PC-9 (cell line): ENCODE measurements at regions of chr20 and their contacts with region 1.

Region 1: DNA sequence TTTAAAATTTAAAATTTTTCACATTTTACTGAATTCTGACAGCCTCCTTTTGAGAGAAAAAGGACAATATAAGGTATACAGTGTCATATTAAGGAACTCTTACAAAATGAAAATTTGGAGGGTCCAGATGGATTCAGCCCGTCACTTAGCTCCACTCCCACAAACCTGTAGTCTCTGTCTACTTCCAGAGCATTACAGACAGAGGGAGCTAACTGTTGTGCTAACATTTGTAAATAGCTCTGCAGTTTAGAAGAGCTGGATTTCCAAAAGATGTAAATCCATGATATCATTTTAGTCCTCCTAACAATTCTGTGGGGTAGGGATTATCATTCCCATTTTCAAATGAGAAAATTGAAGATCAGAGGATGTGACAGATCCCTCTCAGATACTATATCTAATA is 16.1 kb upstream of the SERINC3 start:
- DNase-seq: no peak
- H3K4me3 ChIP-seq: no peak overlapping the region
- H3K27ac ChIP-seq: no peak overlapping the region
- H3K4me1 ChIP-seq: peaks cover 4% of the 10 kb centered on the region
- H3K27me3 ChIP-seq: no peaks in the 10 kb centered on the region
- CTCF ChIP-seq: no peak

Region 2: GRCh38 chr20:44566013-44566412 is 28.0 kb after region 1 on chr20:
- CTCF ChIA-PET with region 1: no interaction called
- POLR2A ChIA-PET with region 1: interaction called, 10 read pairs
- intact Hi-C with region 1: loop called (anchors 5 kb)
- DNase-seq: peak in 1 of 2 experiments; percentile 83
- H3K4me3 ChIP-seq: no peak overlapping the region
- H3K27ac ChIP-seq: no peak overlapping the region
- H3K4me1 ChIP-seq: peaks cover 4% of the 10 kb centered on the region; the same call in 1 of the 2 replicates
- H3K27me3 ChIP-seq: no peaks in the 10 kb centered on the region
- CTCF ChIP-seq: no peak

Region 3: DNA sequence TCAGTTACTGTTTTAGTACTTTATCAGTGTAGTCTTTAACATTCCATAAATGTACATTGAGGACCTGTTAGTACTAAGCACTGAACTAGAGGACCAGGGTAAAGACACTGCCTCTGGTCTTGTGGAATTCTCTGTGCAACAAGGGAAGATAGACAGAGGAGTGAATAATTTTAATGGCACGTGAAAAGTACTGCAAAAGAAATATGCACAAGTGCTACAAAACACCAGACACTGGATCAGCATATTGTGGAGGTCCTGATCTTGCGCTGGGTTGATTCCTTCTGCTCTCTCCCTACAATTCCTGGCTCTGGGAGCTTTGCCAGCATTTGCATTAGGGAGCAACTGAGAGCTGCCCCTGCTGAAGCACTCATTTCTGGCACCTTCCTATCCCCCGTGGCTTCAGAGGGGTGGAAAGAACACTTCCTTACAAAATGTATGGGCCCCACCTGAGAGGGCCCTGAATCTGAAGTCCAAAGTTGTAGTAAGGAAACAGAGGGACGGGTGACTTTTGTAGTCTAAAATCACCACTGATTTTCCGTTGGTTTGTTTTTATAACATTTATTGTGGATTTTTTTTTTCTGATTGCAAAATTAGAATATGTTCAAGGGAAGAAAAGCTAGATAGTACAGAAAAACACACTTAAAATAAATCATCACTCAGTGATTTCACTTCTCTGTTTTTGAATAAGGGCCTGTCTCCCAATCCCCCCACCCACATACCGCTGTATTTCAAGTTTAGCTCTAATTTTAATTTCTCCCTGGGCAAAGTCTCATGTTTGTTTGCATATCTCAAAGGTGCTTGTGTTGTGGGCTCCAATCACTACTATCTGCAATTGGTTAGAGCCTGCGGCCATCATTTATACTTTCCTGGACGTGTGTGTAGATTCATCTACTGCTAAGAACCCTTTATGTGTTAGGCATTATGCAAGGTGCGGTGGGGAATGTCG is 49.3 kb after region 1 on chr20:
- CTCF ChIA-PET with region 1: no interaction called
- POLR2A ChIA-PET with region 1: no interaction called
- intact Hi-C with region 1: no loop called
- DNase-seq: no peak
- H3K4me3 ChIP-seq: no peak overlapping the region
- H3K27ac ChIP-seq: no peak overlapping the region
- H3K4me1 ChIP-seq: no peaks in the 10 kb centered on the region
- H3K27me3 ChIP-seq: no peaks in the 10 kb centered on the region
- CTCF ChIP-seq: no peak

Region 4: DNA sequence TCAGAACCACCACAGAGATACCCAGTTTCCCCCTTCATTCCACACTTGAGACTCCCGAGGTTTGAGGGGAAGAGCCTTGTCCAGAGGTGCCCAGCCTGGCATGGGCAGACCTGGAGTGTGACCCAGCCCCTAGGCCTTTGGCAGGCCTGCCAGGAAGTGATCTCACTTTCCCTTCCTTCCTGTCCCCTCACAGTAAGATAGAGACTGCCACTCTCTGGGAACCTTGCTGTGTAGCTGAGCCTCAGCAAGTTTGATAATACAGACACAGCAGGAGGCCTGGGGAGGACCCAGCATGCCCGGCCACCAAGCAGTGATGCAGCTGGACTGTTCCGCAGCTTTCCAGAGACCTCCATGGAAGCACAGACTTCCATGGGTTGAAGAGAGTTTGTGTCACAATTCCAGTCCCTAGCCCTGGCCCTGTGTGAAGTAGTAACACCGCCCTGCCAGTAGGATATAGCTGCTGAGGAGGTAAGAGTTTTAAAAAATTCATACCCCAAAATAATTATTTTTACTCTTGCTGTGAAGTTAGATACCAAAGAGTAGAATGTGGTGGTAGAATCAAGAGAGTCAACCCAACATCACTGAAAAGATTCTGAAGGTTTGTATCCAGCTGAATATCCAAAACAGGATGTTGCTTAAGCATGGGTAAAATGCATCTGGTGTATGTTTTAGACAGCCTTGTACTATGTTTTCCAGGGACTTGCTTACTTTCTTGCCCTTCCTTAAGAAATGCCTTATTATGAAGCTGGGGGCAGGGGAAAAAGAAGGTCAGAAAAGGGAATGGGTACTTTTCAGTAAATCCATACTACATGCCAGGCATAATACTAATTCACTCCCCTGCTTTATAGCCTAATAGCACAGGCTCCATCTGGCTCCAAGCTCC is 60.7 kb after region 1 on chr20:
- CTCF ChIA-PET with region 1: interaction called, 9 read pairs
- POLR2A ChIA-PET with region 1: interaction called, 12 read pairs
- intact Hi-C with region 1: no loop called
- DNase-seq: no peak
- H3K4me3 ChIP-seq: no peak overlapping the region
- H3K27ac ChIP-seq: no peak overlapping the region
- H3K4me1 ChIP-seq: peaks cover 17% of the 10 kb centered on the region
- H3K27me3 ChIP-seq: no peaks in the 10 kb centered on the region
- CTCF ChIP-seq: peak; percentile 42; the same call in 1 of the 2 replicates

Region 5: DNA sequence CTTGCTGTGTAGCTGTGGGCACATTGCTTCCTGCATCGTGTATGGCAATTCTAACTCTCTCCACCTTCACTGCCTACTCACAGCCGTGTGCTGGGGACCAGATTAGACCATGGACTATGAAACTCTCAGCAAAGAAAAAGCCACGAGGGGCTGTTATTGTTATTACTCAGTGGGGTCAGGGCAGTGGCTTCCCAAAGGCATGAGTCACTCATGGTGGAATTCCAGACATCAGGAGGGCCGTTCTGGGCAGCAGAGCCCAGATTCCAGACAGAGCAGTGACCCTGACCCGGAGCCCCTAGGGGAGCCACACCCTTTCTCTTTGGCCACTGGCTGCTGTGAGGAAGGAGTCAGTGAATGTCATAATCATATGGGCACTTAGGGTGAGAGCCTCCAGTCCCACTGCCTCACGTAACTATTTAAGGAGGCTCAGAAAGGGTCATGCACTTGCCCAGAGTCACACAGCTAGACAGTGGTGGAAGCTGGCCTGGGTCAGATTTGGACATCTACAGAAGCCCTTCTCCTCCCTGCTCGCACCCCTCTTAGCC is 155.0 kb after region 1 on chr20:
- CTCF ChIA-PET with region 1: no interaction called
- POLR2A ChIA-PET with region 1: no interaction called
- intact Hi-C with region 1: no loop called
- DNase-seq: peak; percentile 93 to 97
- H3K4me3 ChIP-seq: no peak overlapping the region
- H3K27ac ChIP-seq: peak overlapping the region; percentile 65
- H3K4me1 ChIP-seq: peaks cover 20% of the 10 kb centered on the region
- H3K27me3 ChIP-seq: no peaks in the 10 kb centered on the region
- CTCF ChIP-seq: no peak